A673 (cell line): ENCODE measurements at regions of chr9 and their contacts with region 1.

Region 1: GRCh38 chr9:18255158-18255629 is 218.8 kb upstream of the ADAMTSL1 start:
- DNase-seq: peak; percentile 61
- H3K4me3 ChIP-seq: no peak overlapping the region
- H3K27ac ChIP-seq: no peak overlapping the region
- H3K4me1 ChIP-seq: no peaks in the 10 kb centered on the region
- H3K27me3 ChIP-seq: no peaks in the 10 kb centered on the region
- CTCF ChIP-seq: peak; percentile 72

Region 2: GRCh38 chr9:18297550-18297908 is 42.3 kb after region 1 on chr9:
- CTCF ChIA-PET with region 1: no interaction called
- POLR2A ChIA-PET with region 1: no interaction called
- intact Hi-C with region 1: no loop called
- DNase-seq: no peak
- H3K4me3 ChIP-seq: no peak overlapping the region
- H3K27ac ChIP-seq: no peak overlapping the region
- H3K4me1 ChIP-seq: no peaks in the 10 kb centered on the region
- H3K27me3 ChIP-seq: no peaks in the 10 kb centered on the region
- CTCF ChIP-seq: no peak

Region 3: GRCh38 chr9:18317896-18318295 is 62.7 kb after region 1 on chr9:
- CTCF ChIA-PET with region 1: no interaction called
- POLR2A ChIA-PET with region 1: no interaction called
- intact Hi-C with region 1: no loop called
- DNase-seq: no peak
- H3K4me3 ChIP-seq: no peak overlapping the region
- H3K27ac ChIP-seq: no peak overlapping the region
- H3K4me1 ChIP-seq: no peaks in the 10 kb centered on the region
- H3K27me3 ChIP-seq: no peaks in the 10 kb centered on the region
- CTCF ChIP-seq: no peak

Region 4: DNA sequence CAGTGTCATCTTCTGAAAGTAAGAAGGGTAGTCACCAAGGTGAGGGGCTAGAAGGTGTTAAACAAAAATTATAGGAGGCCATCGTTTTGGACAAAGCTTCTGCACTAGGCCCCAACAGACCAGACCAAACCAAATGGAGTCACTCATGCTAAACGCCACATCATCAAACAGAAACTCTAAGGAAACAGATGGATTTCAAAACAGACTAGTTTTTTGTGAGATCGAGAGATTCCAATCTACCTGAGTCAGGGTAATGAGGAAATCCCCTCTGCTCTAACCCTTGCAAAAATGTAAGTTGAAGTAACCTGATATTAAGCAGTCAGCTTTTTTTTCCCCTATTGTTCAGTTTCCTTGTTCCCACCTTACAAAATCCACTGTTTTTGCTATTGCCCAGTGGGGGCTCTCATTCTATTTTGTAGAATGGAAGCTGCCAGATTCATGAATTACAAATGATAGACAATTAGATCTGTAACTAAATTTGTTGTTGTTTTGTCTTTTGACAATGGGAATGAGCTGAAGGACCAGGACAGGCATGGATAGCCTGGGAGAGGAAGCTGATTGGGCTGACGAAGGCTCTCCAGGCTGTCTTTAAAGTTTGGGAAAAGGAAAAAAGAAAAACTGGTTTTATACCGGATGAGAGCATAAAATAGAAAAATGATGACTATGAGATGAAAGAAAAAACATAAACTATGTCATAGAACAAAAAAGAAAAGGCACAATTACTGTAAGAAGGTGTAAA is 124.0 kb after region 1 on chr9:
- CTCF ChIA-PET with region 1: no interaction called
- POLR2A ChIA-PET with region 1: no interaction called
- intact Hi-C with region 1: no loop called
- DNase-seq: no peak
- H3K4me3 ChIP-seq: no peak overlapping the region
- H3K27ac ChIP-seq: no peak overlapping the region
- H3K4me1 ChIP-seq: no peaks in the 10 kb centered on the region
- H3K27me3 ChIP-seq: no peaks in the 10 kb centered on the region
- CTCF ChIP-seq: no peak

Region 5: GRCh38 chr9:18442629-18443491 is 187.7 kb after region 1 on chr9:
- CTCF ChIA-PET with region 1: no interaction called
- POLR2A ChIA-PET with region 1: no interaction called
- intact Hi-C with region 1: loop called (anchors 5 kb)
- DNase-seq: peak; percentile 52
- H3K4me3 ChIP-seq: no peak overlapping the region
- H3K27ac ChIP-seq: no peak overlapping the region
- H3K4me1 ChIP-seq: no peaks in the 10 kb centered on the region
- H3K27me3 ChIP-seq: no peaks in the 10 kb centered on the region
- CTCF ChIP-seq: peak; percentile 72

Region 6: DNA sequence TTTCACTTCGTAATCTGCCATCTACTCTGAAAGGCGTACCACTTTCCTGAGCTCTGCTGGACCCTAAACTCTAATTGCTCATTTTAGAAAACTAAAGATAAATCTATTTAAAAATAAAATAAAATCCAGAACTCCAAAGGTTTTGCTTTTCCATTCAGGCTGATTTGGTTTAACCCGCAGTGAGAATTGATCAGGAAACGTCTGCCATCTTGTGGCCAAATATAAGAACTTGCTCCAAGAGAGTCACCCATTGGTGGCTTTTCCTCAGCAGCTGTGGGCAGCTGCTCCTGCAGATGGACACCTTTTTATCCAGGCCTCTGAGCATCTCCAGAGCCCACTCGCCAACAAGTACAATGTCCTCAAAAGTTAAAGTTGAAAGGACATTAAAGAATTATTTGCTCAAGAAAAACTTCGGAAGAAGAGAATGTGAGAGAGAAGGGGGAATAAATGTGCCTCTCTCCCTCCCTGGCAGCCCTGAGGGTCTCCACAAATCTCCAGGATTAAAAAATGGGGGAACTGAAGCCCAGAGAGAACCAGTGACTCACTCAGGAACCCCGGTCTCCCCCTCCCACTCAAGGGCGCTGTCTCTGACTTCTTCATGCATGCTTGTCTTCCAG is 773.7 kb after region 1 on chr9:
- CTCF ChIA-PET with region 1: no interaction called
- POLR2A ChIA-PET with region 1: no interaction called
- intact Hi-C with region 1: loop called (anchors 5 kb)
- DNase-seq: peak; percentile 45
- H3K4me3 ChIP-seq: no peak overlapping the region
- H3K27ac ChIP-seq: no peak overlapping the region
- H3K4me1 ChIP-seq: no peaks in the 10 kb centered on the region
- H3K27me3 ChIP-seq: no peaks in the 10 kb centered on the region
- CTCF ChIP-seq: peak; percentile 60